Activated B cell treated with CpG ODN at 0.5 μM for 24 hours (primary cell): ENCODE measurements at regions of chr3 and their contacts with region 1.

Region 1: DNA sequence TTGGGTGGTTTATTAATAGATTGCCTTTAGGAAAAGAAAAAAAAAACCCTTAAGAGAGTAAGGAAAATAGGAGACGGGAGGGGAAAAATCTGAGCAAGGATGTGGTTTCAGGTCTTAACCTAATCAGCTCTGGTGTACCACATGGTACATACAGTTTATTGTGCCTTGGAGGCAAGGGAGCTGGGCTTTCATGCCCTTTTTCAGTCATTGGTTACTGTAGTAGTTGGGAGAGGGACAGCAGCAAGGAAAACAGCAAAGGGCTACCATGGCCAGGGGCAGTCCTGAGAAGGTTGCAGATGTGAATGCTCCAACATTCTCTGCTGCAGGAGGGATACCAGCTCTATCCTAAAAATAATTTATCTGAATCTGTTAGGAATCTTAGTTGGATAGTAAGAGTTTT is 5.9 kb downstream of the CMC1 start:
- DNase-seq: no peak
- ATAC-seq: no peak
- H3K4me3 Mint-ChIP-seq: no peak overlapping the region
- H3K27ac Mint-ChIP-seq: no peak overlapping the region
- H3K4me1 Mint-ChIP-seq: peaks cover 44% of the 10 kb centered on the region
- H3K27me3 Mint-ChIP-seq: no peaks in the 10 kb centered on the region
- CTCF ChIP-seq: no peak

Region 2: DNA sequence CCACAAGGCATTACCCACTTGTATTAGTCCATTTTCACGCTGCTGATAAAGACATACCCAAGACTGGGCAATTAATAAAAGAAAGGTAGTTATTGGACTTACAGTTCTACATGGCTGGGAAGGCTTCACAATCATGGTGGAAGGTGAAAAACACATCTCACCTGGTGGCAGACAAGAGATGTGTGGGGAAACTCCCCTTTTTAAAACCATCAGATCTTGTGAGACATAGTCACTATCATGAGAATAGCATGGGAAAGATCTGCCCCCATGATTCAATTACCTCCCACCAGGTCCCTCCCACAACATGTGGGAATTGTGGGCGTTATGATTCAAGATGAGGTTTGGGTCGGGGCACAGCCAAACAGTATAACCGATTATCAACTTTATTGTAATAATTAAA is 22.9 kb before region 1 on chr3:
- CTCF ChIA-PET with region 1: no interaction called
- POLR2A ChIA-PET with region 1: no interaction called
- intact Hi-C with region 1: no loop called
- DNase-seq: no peak
- ATAC-seq: no peak
- H3K4me3 Mint-ChIP-seq: no peak overlapping the region
- H3K27ac Mint-ChIP-seq: no peak overlapping the region
- H3K4me1 Mint-ChIP-seq: no peaks in the 10 kb centered on the region
- H3K27me3 Mint-ChIP-seq: peaks cover 3% of the 10 kb centered on the region
- CTCF ChIP-seq: no peak

Region 3: DNA sequence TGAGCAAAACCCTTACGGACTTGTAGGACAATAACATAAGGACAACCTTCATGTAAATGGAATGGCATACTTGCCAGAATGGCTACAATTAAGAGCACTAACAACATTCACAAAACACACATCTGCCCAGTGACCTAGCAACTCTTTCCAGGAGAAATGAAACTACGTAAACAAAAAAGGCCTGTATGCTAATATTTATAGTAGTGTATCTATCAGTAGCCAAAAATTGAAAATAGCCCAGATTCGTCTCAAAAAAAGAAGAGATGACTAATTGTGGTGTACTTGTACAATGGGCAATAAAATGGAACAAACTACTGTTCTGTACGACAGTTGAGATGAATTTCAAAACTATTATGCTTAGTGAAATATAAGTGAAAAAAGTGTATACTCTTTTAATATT is 32.5 kb after region 1 on chr3:
- CTCF ChIA-PET with region 1: no interaction called
- POLR2A ChIA-PET with region 1: no interaction called
- intact Hi-C with region 1: loop called (anchors 5 kb)
- DNase-seq: no peak
- ATAC-seq: no peak
- H3K4me3 Mint-ChIP-seq: no peak overlapping the region
- H3K27ac Mint-ChIP-seq: no peak overlapping the region
- H3K4me1 Mint-ChIP-seq: no peaks in the 10 kb centered on the region
- H3K27me3 Mint-ChIP-seq: no peaks in the 10 kb centered on the region
- CTCF ChIP-seq: no peak